Activated T-helper 1 cell treated with anti-CD3 and anti-CD28 coated beads, Interleukin-12 subunit alpha, Interleukin-12 subunit beta, Interleukin-2, Interleukin-4 antibody, amounts not matched to agents 30 ng/mL and 10 ng/mL and 1 ng/mL, durations not matched to agents 14 hours and 24 hours and 36 hours (primary cell): ENCODE measurements at regions of chr3 and their contacts with region 1.

Region 1: DNA sequence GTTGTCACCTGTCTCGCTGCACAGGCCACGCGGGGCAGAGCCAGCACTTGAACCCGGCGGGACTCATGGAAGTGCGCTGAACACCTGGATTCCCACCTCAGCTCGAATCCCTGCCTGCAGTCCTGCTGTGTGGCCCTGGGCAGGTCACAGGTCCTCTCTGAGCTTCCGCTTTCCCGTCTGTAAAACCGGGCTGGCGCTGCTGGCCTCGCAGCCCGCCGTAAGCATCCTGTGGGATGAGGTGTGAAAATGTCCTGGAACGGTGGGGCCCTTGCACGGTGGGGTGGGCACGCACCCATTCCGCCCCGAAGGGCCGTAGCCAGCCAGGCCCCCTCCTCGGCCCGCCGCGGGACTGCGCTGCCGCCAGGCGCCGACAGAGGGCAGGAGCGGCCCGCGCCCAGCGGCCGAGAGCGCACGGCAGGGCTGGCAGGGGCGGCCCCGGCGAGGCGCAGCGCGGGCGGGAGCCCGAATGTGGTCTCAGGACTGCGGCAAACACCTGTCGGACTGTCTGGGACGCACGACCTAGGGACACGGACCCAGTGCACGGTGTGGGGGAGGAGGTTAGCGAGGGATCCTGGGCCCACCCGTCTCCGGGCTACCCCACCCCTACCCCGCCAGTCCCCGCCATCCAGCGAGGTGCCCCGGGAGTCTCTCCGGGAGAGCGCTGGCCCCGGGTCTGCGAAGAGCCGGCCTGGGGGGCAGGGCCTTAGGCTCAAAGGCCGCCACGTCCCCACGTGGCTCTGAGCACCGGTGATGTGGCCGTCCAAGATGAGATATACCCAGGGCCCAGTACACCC is 40.4 kb downstream of the DNAJB8 start:
- DNase-seq: peak; percentile 52
- H3K4me3 Mint-ChIP-seq: no peak overlapping the region
- H3K27ac Mint-ChIP-seq: no peak overlapping the region
- H3K4me1 Mint-ChIP-seq: no peaks in the 10 kb centered on the region
- H3K27me3 Mint-ChIP-seq: peaks cover 21% of the 10 kb centered on the region

Region 2: DNA sequence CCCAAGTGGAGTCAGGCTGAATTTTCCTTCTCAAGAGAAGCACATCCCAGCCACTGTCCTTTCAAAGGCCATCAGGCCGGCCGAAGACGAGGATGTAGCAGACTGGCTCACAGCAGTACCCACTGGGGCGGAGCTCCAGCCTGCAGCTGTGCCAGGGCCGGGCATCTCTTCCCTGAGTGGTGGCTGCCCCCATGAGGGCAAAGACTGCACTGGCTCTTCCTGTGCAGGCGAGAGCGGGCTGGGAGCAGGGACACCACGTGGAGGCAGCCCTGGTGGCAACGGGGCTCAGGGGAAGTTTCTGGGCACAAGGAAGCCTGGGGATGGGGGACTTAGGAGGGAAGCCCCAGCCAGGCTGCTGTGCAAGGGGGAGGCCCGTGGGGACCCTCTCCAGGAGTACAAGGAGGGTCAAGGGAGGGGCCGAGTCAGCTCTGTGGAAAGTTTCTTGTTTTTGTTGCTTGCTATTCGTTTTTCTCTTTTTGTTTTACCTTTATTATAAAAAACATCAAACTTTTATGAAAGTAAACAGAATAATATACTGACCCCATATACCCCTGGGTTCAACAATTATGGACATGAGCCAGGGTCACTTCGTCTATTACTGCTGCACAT is 158.2 kb after region 1 on chr3:
- intact Hi-C with region 1: loop called (anchors 2 kb)
- DNase-seq: no peak
- H3K4me3 Mint-ChIP-seq: no peak overlapping the region
- H3K27ac Mint-ChIP-seq: no peak overlapping the region
- H3K4me1 Mint-ChIP-seq: peaks cover 12% of the 10 kb centered on the region
- H3K27me3 Mint-ChIP-seq: peaks cover 8% of the 10 kb centered on the region

Region 3: GRCh38 chr3:128607710-128608048 is 181.4 kb after region 1 on chr3:
- intact Hi-C with region 1: loop called (anchors 1 kb)
- DNase-seq: no peak
- H3K4me3 Mint-ChIP-seq: no peak overlapping the region
- H3K27ac Mint-ChIP-seq: no peak overlapping the region
- H3K4me1 Mint-ChIP-seq: no peaks in the 10 kb centered on the region
- H3K27me3 Mint-ChIP-seq: peaks cover 12% of the 10 kb centered on the region